ENCODE measurements at regions of chr1 and their contacts with region 1.

Region 1: DNA sequence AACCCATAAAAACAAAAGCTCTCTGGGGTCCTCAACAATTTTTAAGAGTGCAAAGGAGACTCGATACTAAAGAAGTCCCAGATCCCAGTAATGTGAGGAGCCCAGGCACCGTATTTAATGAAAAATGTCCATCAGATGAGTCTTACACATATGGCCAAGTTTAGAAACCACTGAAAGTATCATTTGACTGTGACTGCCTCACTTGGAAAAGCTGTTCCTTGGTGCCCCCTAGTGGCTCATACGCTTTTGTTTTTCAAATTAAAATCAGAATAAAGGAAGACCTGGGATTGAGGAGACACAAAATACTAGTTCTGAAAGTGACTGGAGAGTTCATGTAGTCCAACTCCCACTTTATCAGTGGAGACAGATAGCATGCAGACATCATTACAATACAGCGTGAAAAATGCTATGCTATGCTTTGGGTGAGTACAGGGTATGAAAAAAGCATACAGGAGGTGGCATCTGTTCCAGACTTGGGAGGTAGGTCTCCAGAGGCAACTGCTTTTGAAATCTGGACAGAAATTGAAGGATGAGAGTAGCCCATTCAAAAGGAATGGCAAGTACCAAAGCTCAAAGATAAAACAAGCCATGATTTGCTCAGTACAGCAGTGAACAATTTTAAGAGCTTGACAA is 33.8 kb downstream of the GDAP2 start:
- DNase-seq: peak; percentile 77
- ATAC-seq: peak; percentile 72
- H3K4me3 Mint-ChIP-seq: no peak overlapping the region
- H3K27ac Mint-ChIP-seq: no peak overlapping the region
- H3K4me1 Mint-ChIP-seq: no peaks in the 10 kb centered on the region
- H3K27me3 Mint-ChIP-seq: no peaks in the 10 kb centered on the region

Region 2: DNA sequence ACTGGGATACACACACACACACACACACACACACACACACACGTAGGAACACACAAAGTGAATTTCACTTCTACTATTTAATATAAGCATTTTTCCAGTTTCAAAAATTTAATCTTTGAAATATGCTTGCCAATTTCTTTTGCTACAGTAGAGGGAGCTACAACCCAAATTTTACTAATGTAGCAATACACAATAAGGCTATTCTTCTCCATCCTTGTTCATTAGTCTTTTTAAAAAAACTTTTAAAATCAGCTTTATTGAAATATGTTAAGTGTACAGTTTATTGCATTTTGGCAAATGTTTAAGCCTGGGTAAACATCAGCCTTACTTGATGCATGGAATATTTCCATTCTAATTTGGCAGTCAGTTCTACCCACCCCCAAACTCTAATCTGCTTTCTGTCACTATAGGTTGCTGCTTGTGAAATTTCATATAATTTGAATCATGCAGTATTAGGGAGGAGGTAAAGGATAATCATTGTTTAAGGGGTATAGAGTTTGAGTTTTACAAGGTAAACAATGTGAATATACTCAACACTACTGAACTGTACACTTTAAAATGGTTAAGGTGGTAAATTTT is 382.8 kb before region 1 on chr1:
- CTCF ChIA-PET with region 1: interaction called, 21 read pairs
- POLR2A ChIA-PET with region 1: no interaction called
- DNase-seq: no peak
- ATAC-seq: peak; percentile 27
- H3K4me3 Mint-ChIP-seq: no peak overlapping the region
- H3K27ac Mint-ChIP-seq: no peak overlapping the region
- H3K4me1 Mint-ChIP-seq: no peaks in the 10 kb centered on the region
- H3K27me3 Mint-ChIP-seq: no peaks in the 10 kb centered on the region

Region 3: DNA sequence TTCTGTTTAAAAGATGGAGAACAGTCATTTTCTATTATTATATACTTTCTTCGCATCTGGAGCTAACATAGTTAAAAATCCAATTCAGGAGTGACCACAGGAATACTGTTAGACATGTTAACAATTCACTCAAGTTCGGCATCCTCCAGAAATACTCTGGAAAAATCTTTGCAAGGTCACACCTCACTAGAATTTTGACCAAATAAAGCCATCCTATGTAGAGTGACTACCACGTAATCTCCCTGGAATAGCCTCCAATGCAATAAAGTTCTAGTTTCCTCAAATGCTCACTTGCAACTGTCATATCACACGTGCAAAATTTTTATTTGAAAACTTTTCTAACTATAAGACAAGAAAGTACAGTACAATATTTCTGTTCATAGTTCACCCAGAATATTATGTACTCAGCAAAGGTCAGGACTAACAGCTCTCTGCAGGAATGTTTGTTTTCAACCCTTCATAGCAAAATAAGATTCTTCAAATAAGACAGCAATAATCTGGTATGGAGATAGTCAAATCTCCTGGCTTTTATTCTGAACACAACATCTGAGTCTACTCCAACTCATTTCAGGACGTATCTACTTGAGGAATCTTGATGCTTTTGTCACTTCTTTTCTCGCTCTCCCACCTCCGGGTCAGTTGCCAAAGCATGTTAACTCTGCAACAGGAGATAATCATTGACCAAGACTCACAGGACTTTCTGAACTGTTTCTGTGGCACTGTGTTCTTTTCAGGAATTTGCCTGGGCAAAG is 48.7 kb before region 1 on chr1:
- CTCF ChIA-PET with region 1: no interaction called
- POLR2A ChIA-PET with region 1: no interaction called
- DNase-seq: no peak
- ATAC-seq: no peak
- H3K4me3 Mint-ChIP-seq: no peak overlapping the region
- H3K27ac Mint-ChIP-seq: no peak overlapping the region
- H3K4me1 Mint-ChIP-seq: no peaks in the 10 kb centered on the region
- H3K27me3 Mint-ChIP-seq: no peaks in the 10 kb centered on the region

Region 4: GRCh38 chr1:117929173-117929989 is 33.8 kb after region 1 on chr1 and contains the starts of genes GDAP2 and WDR3:
- CTCF ChIA-PET with region 1: interaction called, 26 read pairs
- POLR2A ChIA-PET with region 1: no interaction called
- DNase-seq: peak; percentile 98
- ATAC-seq: peak; percentile 96
- H3K4me3 Mint-ChIP-seq: peak within 1 kb of the TSS; percentile 94
- H3K27ac Mint-ChIP-seq: peak within 1 kb of the TSS; percentile 90
- H3K4me1 Mint-ChIP-seq: peaks cover 52% of the 10 kb centered on the region
- H3K27me3 Mint-ChIP-seq: no peaks in the 10 kb centered on the region
- total RNA-seq, gene GDAP2: 19.8 to 21.1 TPM
- total RNA-seq, gene WDR3: 25.3 to 27.5 TPM

Measured in activated CD8-positive, alpha-beta T cell treated with anti-CD3 and anti-CD28 coated beads, Interleukin-2, amount 10 ng/mL, durations not matched to agents 7 days and 5 days (primary cell).